ENCODE measurements at regions of chr15 and their contacts with region 1.

Region 1: GRCh38 chr15:85289677-85290365 is 90.6 kb upstream of the AKAP13 start:
- DNase-seq: no peak
- H3K4me3 ChIP-seq: no peak overlapping the region
- H3K27me3 ChIP-seq: peaks cover 4% of the 10 kb centered on the region
- CTCF ChIP-seq: peak; percentile 52

Region 2: DNA sequence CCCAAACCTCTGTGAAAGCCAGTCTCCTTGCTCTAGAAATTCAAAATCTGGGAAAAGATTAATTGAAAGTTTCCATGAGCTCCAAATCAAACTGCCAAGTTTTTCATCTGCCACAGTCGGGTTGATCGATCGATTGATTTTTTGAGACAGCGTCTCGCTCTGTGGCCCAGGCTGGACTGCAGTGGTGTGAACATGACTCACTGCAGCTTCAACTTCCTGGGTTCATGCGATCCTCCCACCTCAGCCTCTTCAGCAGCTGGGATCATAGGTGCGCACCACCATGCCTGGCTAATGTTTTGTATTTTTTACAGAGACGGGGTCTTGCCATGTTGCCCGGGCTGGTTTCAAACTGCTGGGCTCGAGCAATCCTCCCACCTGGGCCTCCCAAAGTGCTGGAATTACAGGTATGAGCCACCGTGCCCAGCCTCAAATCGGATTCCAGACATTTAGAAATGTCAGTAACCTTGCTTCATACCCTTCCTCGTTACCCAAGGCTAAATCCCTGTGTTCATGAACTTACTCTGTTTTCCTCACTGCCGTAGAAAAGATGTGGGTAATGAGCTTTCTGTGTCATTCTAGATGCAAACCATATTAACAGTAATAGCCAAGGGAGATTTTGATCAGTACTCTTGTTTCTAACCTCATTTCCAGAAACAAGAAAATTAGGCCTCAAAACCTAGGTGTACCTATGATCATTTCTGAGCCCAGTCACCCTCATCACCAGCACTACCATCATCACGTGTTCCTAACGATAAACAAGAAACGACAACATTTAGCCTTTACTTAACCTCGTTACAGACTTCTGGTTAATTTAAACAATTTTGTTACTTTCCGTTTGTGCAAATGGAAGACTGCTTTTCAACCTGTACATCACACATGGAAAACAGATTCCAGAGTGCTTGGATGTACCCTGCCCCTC is 15.2 kb before region 1 on chr15:
- CTCF ChIA-PET with region 1: interaction called, 10 read pairs
- POLR2A ChIA-PET with region 1: no interaction called
- DNase-seq: no peak
- H3K4me3 ChIP-seq: no peak overlapping the region
- H3K27me3 ChIP-seq: no peaks in the 10 kb centered on the region
- CTCF ChIP-seq: no peak

Measured in BJ (cell line).